ENCODE measurements at regions of chrX and their contacts with region 1.

Region 1: GRCh38 chrX:133005066-133005465 is 46.6 kb upstream of the HS6ST2 start:
- DNase-seq: no peak
- ATAC-seq: no peak

Region 2: DNA sequence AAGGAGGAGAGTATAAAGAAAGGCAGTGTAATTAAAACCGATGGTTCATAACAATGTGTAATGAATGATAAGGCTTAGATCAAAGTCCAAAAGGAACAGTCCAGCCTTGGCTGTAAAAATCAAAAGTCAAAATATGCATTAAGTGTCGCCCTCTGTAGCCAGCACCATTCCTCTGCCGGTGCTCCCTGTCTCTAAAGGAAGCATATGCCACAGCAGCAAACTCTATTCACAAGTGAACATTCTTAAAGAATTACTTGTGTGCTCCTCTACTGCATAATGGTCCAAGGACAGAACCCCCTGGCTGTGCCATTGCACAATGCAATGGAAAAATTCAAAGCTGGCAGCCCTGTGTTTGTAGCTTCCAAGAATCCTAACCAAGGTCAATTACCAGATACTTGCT is 499.9 kb before region 1 on chrX:
- intact Hi-C with region 1: no loop called
- DNase-seq: no peak
- ATAC-seq: no peak

Region 3: DNA sequence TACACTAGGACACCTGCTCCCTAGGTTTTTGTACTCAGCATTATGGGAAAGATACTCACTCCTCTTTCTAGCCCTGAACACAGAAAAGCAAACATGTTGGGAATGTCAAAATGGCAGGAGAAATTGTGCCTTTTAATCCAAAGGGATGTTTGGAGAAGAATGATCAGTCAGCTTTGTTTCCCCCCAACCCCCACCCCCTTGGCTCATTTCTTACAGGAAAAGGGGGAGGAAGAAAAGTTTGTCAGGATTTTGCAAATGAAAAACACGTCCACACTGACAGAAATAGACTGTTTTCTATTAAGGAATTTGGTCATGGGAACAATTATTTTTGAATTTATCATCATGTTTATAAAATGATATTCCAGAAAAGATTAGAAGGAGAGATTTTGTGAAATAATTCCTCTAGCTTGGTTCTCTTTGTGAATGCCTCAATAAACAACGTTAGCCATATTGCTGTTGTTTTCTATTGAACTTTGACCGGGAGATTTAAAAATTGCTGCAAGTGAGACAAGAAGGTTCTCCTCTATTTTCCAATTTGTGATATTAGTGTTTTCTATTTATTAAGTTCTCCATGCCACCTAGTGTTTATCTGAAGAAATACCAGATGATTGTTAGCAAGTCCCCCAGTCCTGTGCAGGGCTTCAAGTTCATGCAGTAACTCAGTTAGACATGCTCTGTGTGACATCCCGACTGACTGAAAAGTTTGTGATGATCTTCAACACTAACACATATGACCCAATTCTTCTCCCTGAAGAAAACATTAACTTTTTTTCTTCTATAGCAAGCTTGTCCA is 244.4 kb after region 1 on chrX:
- intact Hi-C with region 1: loop called (anchors 10 kb)
- DNase-seq: no peak
- ATAC-seq: no peak

Region 4: GRCh38 chrX:133530960-133531359 is 525.9 kb after region 1 on chrX:
- intact Hi-C with region 1: no loop called
- DNase-seq: no peak
- ATAC-seq: peak; percentile 65

Measured in Right ventricle myocardium inferior (tissue), 1 donor.